ENCODE measurements at regions of chr1 and their contacts with region 1.

Region 1: DNA sequence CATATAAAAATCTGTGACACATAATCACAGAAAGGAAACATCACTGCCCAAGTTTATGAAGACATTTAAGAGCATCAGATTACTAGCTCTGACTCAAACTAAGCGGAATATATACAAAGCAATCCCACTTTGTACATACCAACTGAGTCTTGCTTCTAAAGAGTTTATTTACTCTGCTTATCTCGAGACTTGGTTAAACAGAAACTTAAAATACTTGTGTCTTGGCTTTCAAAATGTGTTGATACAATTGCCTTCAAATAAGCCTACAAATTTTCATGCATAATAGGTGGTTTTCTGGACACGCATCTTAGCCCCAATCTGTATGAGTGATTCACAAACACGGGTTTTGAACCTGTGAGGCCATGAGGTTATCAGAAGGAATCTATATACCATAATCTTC is 21.0 kb downstream of the CD160 start:
- DNase-seq: no peak
- H3K4me3 ChIP-seq: no peak overlapping the region
- H3K27ac ChIP-seq: no peak overlapping the region
- H3K4me1 ChIP-seq: no peaks in the 10 kb centered on the region
- H3K27me3 ChIP-seq: no peaks in the 10 kb centered on the region
- CTCF ChIP-seq: no peak

Region 2: GRCh38 chr1:145795257-145795881 is 55.1 kb after region 1 on chr1:
- intact Hi-C with region 1: loop called (anchors 10 kb)
- DNase-seq: no peak
- H3K4me3 ChIP-seq: no peak overlapping the region
- H3K27ac ChIP-seq: no peak overlapping the region
- H3K4me1 ChIP-seq: no peaks in the 10 kb centered on the region
- H3K27me3 ChIP-seq: no peaks in the 10 kb centered on the region
- CTCF ChIP-seq: no peak

Measured in ascending aorta (tissue), 2 donors.